AG04449 (cell line): ENCODE measurements at regions of chr1 and their contacts with region 1.

Region 1: DNA sequence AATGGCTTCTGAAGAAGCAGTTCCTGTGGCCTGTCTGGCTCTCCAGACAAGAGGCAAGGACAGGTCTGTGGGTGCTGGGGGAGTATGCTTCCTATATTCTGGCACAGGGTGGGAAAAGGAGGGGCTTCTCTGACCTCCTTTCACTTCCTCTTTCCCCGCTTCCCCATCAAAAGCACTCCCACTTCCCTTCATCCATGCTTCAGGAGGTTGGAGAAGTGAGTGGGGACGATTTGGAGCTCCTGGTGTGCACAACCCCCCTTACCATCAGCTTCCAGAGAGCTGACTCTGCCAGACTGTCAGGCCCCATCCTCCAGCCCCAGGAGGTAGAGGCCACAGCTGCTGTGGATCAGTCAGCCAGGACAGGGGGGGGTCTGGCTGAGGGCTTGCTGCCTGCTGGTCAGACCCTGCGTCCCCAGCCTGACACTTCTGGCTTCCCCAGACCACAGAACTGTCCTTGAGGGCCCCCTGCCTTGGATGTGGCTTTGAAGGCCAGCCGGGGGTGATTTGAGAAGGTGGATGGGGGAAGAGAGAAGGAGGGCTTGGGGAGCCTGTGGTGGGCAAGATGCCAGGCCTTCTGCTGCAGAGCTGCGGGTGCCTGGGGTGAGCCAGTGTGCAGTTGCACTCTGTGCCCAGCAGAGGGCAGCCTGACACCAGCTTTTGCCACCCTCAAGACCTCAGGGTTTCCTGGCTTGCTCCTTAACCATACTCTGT is 21.5 kb upstream of the TMEM222 start:
- DNase-seq: peak; percentile 62
- H3K4me3 ChIP-seq: peak overlapping the region; percentile 29
- CTCF ChIP-seq: peak; percentile 99

Region 2: GRCh38 chr1:26993237-26994019 is 307.1 kb before region 1 on chr1 and contains the start of gene TRNP1:
- CTCF ChIA-PET with region 1: interaction called, 10 read pairs
- POLR2A ChIA-PET with region 1: no interaction called
- DNase-seq: no peak
- H3K4me3 ChIP-seq: peak within 1 kb of the TSS; percentile 75
- CTCF ChIP-seq: no peak

Region 3: DNA sequence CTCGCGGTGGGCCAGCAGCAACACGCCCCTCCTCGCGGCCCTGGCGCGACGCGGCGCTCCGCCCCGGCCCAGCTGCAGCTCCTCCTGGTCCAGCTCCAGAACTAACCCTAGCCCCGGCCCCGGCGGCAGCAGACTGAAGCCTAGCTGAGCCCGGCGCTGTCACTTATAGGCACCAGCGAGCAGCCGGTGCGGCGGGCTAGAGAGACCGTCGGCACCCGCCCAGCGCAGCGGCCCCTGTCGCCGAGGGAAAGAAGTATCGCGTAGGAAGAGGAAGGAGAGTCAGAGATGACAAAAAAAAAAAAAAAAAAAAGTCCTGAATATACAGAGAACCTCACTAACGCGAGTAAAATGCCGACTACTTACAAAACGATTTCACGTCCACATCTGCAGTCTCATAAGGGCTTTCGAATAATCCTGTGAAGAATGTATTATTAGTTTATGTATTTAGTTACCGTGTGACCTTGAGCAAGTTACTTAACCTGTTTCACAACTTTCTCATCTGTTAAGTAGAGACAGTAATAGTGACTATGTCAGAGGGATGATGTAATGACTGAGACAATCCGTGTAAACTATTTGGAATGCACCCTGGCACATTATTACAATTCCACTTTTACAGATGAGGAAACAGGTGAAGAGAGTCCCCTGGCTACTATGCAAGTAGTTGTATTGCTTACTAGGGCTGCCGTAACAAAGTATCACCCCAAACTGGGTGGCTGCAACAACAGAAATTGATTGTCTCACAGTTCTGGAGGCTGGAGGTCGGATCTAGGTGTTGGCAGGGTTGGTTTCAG is 145.3 kb before region 1 on chr1 and contains the start of gene SLC9A1:
- CTCF ChIA-PET with region 1: interaction called, 12 read pairs
- POLR2A ChIA-PET with region 1: interaction called, 6 read pairs
- DNase-seq: peak; percentile 56
- H3K4me3 ChIP-seq: peak within 1 kb of the TSS; percentile 66
- CTCF ChIP-seq: peak; percentile 89

Region 4: DNA sequence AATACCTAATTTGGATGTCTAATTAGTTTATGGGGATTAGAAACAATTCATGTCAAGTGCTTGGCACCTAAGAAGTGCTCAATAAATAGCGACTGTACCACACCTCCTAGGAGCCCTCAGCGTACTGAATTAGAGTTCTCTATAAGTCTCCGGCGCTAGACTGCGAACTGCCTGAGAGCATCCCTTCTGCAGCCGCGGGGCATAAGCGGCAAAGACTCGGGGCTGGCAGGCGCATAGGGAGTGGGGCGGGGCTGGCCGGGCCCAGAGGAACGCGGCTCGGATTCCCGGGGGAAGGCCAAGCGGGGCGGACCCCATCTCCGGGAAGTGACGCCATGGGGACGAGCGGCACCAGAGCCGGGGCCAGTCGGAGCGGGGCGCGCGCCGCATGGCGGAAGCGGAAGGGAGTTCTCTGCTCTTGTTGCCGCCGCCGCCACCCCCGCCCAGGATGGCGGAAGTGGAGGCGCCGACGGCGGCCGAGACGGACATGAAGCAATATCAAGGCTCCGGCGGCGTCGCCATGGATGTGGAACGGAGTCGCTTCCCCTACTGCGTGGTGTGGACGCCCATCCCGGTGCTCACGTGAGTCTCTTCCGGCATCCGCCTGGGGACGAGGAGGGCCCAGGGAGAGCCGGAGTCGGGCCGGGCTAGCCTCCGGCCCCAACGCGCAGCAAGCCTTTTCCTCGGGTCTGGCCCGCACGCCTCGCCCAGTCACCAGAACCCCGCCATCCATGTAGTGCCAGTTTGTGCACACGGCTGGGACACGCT is 21.5 kb after region 1 on chr1 and contains the start of gene TMEM222:
- CTCF ChIA-PET with region 1: interaction called, 257 read pairs
- POLR2A ChIA-PET with region 1: interaction called, 3 read pairs
- DNase-seq: peak; percentile 71
- H3K4me3 ChIP-seq: peak within 1 kb of the TSS; percentile 100
- CTCF ChIP-seq: peak; percentile 14

Region 5: GRCh38 chr1:27365372-27366112 is 65.0 kb after region 1 on chr1:
- CTCF ChIA-PET with region 1: interaction called, 181 read pairs
- POLR2A ChIA-PET with region 1: interaction called, 31 read pairs
- DNase-seq: peak; percentile 42
- H3K4me3 ChIP-seq: peak overlapping the region; percentile 63
- CTCF ChIP-seq: no peak

Region 6: DNA sequence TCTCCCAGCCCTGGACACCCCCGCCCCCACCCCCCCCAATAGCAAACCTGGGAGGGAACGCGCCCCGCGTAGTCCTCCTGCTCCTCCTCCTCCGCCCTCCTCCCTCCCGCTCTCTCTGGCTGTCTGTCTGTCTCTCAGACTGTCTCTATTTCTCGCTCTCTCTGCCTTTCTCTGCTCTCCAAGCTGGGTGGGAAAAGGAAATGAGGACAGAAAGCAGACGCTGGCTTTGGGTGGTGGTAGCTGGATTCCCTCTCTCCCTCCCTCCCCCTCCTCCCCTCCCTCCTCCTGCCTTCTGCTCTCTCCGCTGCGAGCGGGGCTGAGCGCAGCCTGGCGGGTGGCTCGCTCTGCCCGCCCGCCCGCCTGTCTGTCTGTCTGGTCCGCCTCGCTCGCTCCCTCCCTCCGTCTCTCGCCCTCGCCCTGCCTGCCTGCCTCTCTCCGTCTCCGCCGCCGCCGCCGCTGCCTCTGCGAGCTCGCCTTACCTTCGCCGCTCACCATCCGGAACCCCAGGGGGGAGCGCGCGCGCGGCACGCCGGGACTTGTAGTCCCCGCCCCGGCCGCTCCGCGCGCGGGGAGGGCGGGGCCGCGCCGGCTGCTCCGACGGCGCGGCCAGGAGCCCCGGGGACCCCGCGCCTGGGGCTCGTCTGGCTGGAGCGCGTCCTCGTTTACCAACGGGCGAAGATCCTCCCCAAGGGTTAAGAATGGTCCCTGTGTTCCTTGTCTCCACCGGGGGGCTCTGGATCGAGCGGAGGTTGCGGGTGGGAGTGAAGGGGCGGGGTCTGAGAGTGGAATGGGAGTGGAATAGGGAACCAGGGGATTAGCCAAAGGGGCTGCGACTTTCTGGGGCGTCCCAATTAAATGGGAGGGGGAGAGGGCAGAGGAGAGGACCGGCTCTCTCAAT is 303.4 kb after region 1 on chr1 and contains the start of gene AHDC1:
- CTCF ChIA-PET with region 1: interaction called, 246 read pairs
- POLR2A ChIA-PET with region 1: interaction called, 9 read pairs
- DNase-seq: peak; percentile 33
- H3K4me3 ChIP-seq: peak within 1 kb of the TSS; percentile 87
- CTCF ChIP-seq: no peak